HepG2 (cell line): ENCODE measurements at regions of chr14 and their contacts with region 1.

Region 1: DNA sequence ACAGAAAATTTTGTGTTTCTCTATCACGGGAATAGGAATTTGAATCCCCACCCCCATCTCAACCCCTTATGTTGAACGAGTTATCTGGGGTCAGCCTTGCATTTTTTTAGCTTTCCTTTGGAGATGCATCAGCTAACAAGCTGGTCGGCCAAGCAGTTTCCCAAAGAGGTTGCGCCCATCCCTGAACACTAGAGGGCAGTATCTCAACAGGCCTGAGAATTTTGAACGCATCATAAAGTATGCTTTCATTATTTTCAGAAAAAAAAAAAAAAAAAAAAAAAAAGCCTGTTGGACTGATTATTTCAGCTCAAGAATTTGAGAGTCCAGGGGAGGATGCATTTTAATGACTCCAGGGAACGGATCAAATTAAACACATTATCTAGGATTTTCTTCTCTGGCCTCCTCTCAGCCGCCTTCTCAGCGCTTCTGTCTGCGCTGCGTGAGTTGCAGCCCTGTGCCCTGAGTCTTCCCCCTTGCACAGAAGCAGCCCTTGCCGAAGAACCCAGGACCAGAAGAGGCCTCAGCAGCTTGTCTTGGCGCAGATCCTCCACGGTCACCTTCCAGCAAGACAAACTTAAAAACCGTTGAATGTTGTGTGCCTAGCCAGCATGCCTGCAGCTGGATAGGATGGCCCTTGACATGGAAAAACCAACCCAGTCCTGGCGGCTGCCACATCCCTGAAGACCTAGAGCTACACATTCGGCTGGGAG is 76.6 kb upstream of the GZMB start:
- DNase-seq: peak; percentile 71
- ATAC-seq: peak; percentile 81
- H3K4me3 ChIP-seq: no peak overlapping the region
- H3K27ac ChIP-seq: no peak overlapping the region
- H3K4me1 ChIP-seq: peaks cover 7% of the 10 kb centered on the region
- H3K27me3 ChIP-seq: peaks cover 4 to 22% of the 10 kb centered on the region in 2 experiments; a peak in 2 of 5 replicates
- CTCF ChIP-seq: peak; percentile 83
- EP300 ChIP-seq: no peak
- POLR2A ChIP-seq: no peak
- RAD21 ChIP-seq: peak; percentile 65

Region 2: DNA sequence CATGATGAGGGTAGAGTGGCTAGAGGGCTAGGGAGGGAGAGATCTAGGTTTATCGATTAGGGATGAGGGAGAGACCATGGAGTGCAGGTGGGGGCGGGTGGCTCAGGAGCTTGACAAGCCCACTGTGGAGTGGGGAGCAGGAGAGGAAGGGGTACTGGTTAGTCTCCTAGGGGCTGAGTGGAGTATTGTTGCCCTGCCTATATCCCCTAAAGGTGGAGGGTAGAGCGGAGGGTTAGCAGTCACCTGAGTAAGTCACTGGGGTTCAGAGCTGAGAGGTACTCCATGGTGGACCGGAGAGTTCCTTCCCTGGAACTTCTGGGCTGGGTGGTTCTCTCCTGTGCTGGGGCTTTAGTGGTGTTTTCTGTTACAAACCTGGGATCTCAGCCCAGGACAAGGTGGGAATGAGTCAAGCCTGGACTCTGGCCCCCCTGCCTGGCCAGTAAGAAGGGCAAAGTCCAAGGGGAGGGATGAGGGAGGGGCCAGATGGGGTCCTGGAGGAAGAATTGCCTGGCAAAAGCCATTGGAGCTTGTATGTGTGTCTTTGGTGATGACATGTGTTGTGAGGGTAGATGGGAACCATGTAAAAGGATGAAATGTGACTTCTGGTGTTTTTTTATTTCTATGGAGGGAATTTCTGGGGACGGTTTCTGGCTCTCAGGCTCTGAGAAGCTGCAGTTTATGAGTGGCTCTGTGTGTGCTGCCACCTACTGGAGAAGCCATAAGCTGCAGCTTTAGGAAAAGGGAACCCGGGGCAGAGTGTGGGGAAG is 402.8 kb before region 1 on chr14 and contains the start of gene CIDEB:
- CTCF ChIA-PET with region 1: no interaction called
- POLR2A ChIA-PET with region 1: no interaction called
- in situ Hi-C with region 1: no loop called
- intact Hi-C with region 1: no loop called
- DNase-seq: peak; percentile 99
- ATAC-seq: peak; percentile 91
- H3K4me3 ChIP-seq: peak within 1 kb of the TSS; percentile 44 to 73 (median 56)
- H3K27ac ChIP-seq: peak within 1 kb of the TSS; percentile 90
- H3K4me1 ChIP-seq: peaks cover 48% of the 10 kb centered on the region
- H3K27me3 ChIP-seq: no peaks in the 10 kb centered on the region; a peak in 1 of 5 replicates
- CTCF ChIP-seq: peak; percentile 99
- EP300 ChIP-seq: peak; percentile 76 to 87
- POLR2A ChIP-seq: peak in 1 of 2 experiments; percentile 89; a peak in 2 of 4 replicates
- RAD21 ChIP-seq: peak; percentile 88
- total RNA-seq, gene CIDEB: 22.4 and 35.8 TPM in 2 replicates

Region 3: DNA sequence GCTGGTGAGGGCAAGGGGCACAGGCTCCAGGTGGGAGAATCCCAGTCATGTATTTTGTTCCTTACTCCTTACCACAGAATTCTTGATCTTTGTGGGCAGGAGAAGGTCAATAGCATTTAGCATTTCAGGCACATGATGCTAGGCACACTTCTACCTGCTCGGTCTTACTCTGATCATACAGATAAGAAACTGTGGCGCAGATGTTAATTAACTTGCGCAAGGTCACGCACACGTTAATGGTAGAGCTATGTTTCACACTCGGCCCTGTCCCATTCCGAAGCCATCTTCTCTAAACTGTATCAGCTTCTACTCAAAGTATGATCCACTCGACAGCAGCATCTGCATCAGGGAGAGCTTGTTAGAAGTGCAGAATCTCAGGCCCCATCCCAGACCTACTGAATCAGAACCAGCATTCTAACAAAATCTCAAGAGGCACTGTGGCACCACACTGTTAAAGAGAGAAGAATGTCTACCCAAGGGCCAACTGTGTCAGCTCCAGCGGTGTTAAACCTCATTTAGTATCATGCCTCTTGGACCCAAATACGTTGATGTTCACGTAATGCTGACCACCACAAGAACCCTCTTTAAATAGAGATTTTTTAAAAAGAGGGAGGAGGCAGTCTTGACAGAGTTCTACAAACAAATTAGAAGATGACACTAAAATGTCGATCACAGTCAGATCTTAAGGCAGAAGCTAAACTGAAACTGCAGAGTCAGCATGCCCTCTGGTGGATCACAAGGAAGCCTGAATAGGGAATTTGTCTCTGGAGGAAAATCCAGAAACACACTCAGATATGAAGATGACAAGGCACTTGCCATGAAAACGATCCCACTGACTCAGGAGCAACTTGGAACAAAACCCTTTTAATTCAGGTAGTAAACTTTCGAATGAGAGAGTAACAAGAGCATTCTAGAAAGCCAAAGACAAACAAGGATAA is 332.1 kb after region 1 on chr14:
- CTCF ChIA-PET with region 1: interaction called, 4 read pairs
- POLR2A ChIA-PET with region 1: no interaction called
- in situ Hi-C with region 1: no loop called
- intact Hi-C with region 1: loop called (anchors 1 kb)
- DNase-seq: peak; percentile 75
- ATAC-seq: peak; percentile 63
- H3K4me3 ChIP-seq: no peak overlapping the region
- H3K27ac ChIP-seq: no peak overlapping the region
- H3K4me1 ChIP-seq: peaks cover 41% of the 10 kb centered on the region
- H3K27me3 ChIP-seq: no peaks in the 10 kb centered on the region
- CTCF ChIP-seq: peak; percentile 89
- EP300 ChIP-seq: no peak
- POLR2A ChIP-seq: no peak
- RAD21 ChIP-seq: peak; percentile 86

Region 4: DNA sequence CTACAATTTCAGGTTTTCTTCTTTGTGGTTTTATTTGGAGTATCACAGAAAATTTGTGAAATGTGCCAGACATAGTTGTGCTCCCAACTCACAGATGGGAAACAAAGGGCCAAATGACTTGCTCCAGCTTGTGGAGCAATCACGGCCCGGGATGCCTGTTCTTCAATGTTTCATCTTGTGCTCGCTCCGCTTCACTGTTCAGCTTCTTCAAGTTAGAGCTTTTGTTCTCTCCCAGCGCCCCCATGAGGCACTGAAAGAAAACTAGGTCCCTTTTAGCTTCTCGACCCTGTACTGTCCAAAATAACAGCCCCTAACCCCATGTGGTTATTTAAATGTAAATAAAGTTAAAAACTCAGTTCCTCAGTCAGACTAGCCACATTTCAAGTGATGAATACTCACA is 527.3 kb after region 1 on chr14:
- CTCF ChIA-PET with region 1: no interaction called
- POLR2A ChIA-PET with region 1: no interaction called
- in situ Hi-C with region 1: no loop called
- intact Hi-C with region 1: loop called (anchors 1 kb)
- DNase-seq: peak; percentile 59
- ATAC-seq: peak; percentile 96
- H3K4me3 ChIP-seq: no peak overlapping the region
- H3K27ac ChIP-seq: no peak overlapping the region
- H3K4me1 ChIP-seq: no peaks in the 10 kb centered on the region
- H3K27me3 ChIP-seq: no peaks in the 10 kb centered on the region
- CTCF ChIP-seq: peak; percentile 75
- EP300 ChIP-seq: no peak
- POLR2A ChIP-seq: no peak
- RAD21 ChIP-seq: no peak; the same call in 1 of the 2 replicates

Region 5: DNA sequence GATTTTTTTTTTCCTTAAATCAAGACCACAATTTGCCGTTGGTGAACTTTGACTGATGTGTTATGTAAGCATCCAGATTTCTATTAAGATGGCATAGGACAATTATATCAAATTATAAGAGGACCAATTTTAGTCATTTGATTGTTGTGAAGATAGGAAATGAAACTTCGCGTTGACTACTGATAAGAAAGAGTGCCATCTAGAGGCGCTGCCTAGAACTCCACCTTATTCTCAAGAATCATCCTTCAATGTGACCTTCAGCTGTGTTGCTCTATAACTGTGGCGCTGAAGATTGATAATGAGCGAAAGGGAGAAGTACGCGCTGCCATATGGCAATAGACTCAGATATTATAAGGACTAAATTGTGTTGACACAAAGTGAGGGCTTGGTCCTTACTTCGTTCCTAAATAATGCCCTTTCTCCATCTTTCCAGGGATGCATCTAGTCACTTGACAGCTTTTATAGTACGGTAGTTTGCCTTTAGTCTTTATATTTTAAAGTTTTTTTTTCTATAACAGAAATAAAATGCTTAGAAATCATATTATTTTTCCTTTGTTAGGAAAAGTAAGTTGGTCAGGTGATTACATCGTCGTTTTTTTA is 690.1 kb after region 1 on chr14:
- CTCF ChIA-PET with region 1: interaction called, 16 read pairs
- POLR2A ChIA-PET with region 1: no interaction called
- in situ Hi-C with region 1: loop called (anchors 5 kb)
- intact Hi-C with region 1: loop called (anchors 1 kb)
- DNase-seq: peak; percentile 70
- ATAC-seq: peak; percentile 94
- H3K4me3 ChIP-seq: no peak overlapping the region
- H3K27ac ChIP-seq: no peak overlapping the region
- H3K4me1 ChIP-seq: no peaks in the 10 kb centered on the region
- H3K27me3 ChIP-seq: no peaks in the 10 kb centered on the region
- CTCF ChIP-seq: peak; percentile 87
- EP300 ChIP-seq: no peak
- POLR2A ChIP-seq: no peak
- RAD21 ChIP-seq: no peak

Region 6: GRCh38 chr14:25406818-25407217 is 696.3 kb after region 1 on chr14:
- CTCF ChIA-PET with region 1: interaction called, 10 read pairs
- POLR2A ChIA-PET with region 1: no interaction called
- in situ Hi-C with region 1: loop called (anchors 5 kb)
- intact Hi-C with region 1: loop called (anchors 1 kb)
- DNase-seq: peak; percentile 68
- ATAC-seq: peak; percentile 87
- H3K4me3 ChIP-seq: no peak overlapping the region
- H3K27ac ChIP-seq: no peak overlapping the region
- H3K4me1 ChIP-seq: no peaks in the 10 kb centered on the region
- H3K27me3 ChIP-seq: no peaks in the 10 kb centered on the region; a peak in 1 of 5 replicates
- CTCF ChIP-seq: peak; percentile 70
- EP300 ChIP-seq: no peak
- POLR2A ChIP-seq: no peak
- RAD21 ChIP-seq: peak; percentile 33; the same call in 1 of the 2 replicates